IMR-90 (cell line): ENCODE measurements at regions of chr4 and their contacts with region 1.

Region 1: GRCh38 chr4:7987148-7987989 is 47.7 kb upstream of the AFAP1 start:
- DNase-seq: peak; percentile 77
- ATAC-seq: peak; percentile 87
- H3K4me3 ChIP-seq: no peak overlapping the region
- H3K27ac ChIP-seq: no peak overlapping the region
- H3K4me1 ChIP-seq: peaks cover 12% of the 10 kb centered on the region
- H3K27me3 ChIP-seq: peaks cover 5% of the 10 kb centered on the region; the same call in 1 of the 2 replicates
- CTCF ChIP-seq: peak; percentile 95
- POLR2A ChIP-seq: 0 out of 2 replicates have a peak, but pooled peaks have one; percentile 38
- RAD21 ChIP-seq: peak; percentile 97

Region 2: GRCh38 chr4:7761720-7762119 is 225.6 kb before region 1 on chr4:
- CTCF ChIA-PET with region 1: no interaction called
- POLR2A ChIA-PET with region 1: no interaction called
- dilution Hi-C with region 1: no loop called
- in situ Hi-C with region 1: loop called (anchors 10 kb)
- intact Hi-C with region 1: no loop called
- DNase-seq: peak; percentile 34
- ATAC-seq: peak; percentile 48; the same call in 1 of the 2 replicates
- H3K4me3 ChIP-seq: no peak overlapping the region
- H3K27ac ChIP-seq: no peak overlapping the region
- H3K4me1 ChIP-seq: peaks cover 4% of the 10 kb centered on the region
- H3K27me3 ChIP-seq: no peaks in the 10 kb centered on the region
- CTCF ChIP-seq: peak; percentile 53
- POLR2A ChIP-seq: no peak
- RAD21 ChIP-seq: peak; percentile 38; the same call in 1 of the 2 replicates

Region 3: GRCh38 chr4:7802093-7802726 is 185.2 kb before region 1 on chr4:
- CTCF ChIA-PET with region 1: interaction called, 8 read pairs
- POLR2A ChIA-PET with region 1: no interaction called
- dilution Hi-C with region 1: no loop called
- in situ Hi-C with region 1: no loop called
- intact Hi-C with region 1: loop called (anchors 1 kb)
- DNase-seq: peak; percentile 85
- ATAC-seq: peak; percentile 84
- H3K4me3 ChIP-seq: no peak overlapping the region
- H3K27ac ChIP-seq: no peak overlapping the region
- H3K4me1 ChIP-seq: peaks cover 23% of the 10 kb centered on the region
- H3K27me3 ChIP-seq: no peaks in the 10 kb centered on the region
- CTCF ChIP-seq: peak; percentile 79
- POLR2A ChIP-seq: no peak
- RAD21 ChIP-seq: peak; percentile 67

Region 4: DNA sequence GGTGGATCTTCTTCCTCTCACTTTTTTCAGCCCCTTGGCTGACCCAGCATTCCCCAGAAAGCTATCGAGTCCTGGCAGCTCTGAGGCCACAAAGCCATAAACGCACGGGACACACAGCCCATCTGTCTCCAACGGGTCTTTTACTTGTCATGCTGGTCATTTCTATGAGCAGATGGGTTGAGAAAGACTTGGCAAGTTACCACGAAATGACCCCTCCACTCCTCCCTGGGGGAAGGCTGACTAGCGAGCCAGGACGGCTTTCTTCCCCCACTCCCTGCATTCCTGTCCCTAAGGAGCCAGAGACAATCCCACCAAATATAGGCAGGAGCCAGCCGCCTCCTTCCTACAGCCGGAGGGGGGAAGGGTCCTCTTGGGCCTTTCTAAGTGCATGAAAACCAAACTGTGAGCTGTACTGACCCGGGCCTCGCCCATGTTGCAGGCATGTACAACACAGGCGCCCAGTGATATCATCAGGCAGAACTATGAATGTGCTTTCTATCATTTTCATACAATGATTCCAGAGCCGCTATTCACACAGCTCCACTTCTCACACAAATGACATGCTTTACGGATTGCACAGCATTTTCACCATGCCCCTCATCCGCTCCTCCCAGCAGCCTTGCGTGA is 76.3 kb before region 1 on chr4:
- CTCF ChIA-PET with region 1: interaction called, 3 read pairs
- POLR2A ChIA-PET with region 1: no interaction called
- dilution Hi-C with region 1: no loop called
- in situ Hi-C with region 1: no loop called
- intact Hi-C with region 1: loop called (anchors 2 kb)
- DNase-seq: peak; percentile 95
- ATAC-seq: peak; percentile 87
- H3K4me3 ChIP-seq: no peak overlapping the region; the same call in 1 of the 2 replicates
- H3K27ac ChIP-seq: peak overlapping the region; percentile 95
- H3K4me1 ChIP-seq: peaks cover 34% of the 10 kb centered on the region
- H3K27me3 ChIP-seq: no peaks in the 10 kb centered on the region
- CTCF ChIP-seq: no peak
- POLR2A ChIP-seq: 0 out of 2 replicates have a peak, but pooled peaks have one; percentile 37
- RAD21 ChIP-seq: no peak; the same call in 1 of the 2 replicates